ENCODE measurements at regions of chr1 and their contacts with region 1.

Region 1: GRCh38 chr1:171530676-171531075 is 45.3 kb downstream of the PRRC2C start:
- DNase-seq: no peak
- ATAC-seq: no peak
- H3K4me3 ChIP-seq: no peak overlapping the region
- H3K27ac ChIP-seq: no peak overlapping the region
- H3K4me1 ChIP-seq: no peaks in the 10 kb centered on the region
- H3K27me3 ChIP-seq: no peaks in the 10 kb centered on the region
- CTCF ChIP-seq: no peak

Region 2: DNA sequence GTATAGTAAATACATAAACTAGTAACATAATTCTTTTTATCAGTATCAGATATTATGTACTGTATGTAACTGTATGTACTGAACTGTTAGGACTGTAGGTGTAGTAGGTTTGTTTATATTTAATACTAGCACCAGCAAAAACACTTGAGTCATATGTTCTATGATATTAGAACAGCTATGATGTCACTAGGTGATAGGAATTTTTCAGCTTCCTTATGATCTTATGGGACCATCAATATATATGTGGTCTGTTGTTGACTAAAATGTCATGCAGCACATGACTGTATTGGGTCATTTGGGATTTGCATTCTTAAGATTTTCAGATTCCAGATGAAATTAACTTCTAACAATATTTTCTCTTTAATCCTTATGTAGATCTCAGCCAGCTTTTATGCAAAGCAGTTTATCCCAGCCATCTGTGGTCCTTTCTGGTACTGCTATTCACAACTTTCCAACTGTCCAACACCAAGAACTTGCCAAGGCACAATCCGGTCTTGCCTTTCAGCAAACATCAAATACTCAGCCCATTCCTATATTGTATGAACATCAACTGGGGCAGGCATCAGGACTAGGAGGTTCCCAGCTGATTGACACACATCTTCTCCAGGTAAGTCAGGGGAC is 53.0 kb after region 1 on chr1:
- intact Hi-C with region 1: loop called in 1 of 2 experiments (anchors 10 kb)
- DNase-seq: no peak
- ATAC-seq: no peak
- H3K4me3 ChIP-seq: no peak overlapping the region
- H3K27ac ChIP-seq: no peak overlapping the region
- H3K4me1 ChIP-seq: no peaks in the 10 kb centered on the region
- H3K27me3 ChIP-seq: no peaks in the 10 kb centered on the region
- CTCF ChIP-seq: no peak

Measured in left lung (tissue), 14 donors.